ENCODE measurements at regions of chr1 and their contacts with region 1.

Region 1: GRCh38 chr1:39609618-39610331 is 29.7 kb downstream of the HEYL start:
- DNase-seq: peak; percentile 79
- ATAC-seq: peak; percentile 72
- H3K4me3 ChIP-seq: no peak overlapping the region
- H3K4me3 Mint-ChIP-seq: no peak overlapping the region
- H3K27ac ChIP-seq: no peak overlapping the region
- H3K27ac Mint-ChIP-seq: no peak overlapping the region
- H3K4me1 ChIP-seq: peaks cover 0 to 10% of the 10 kb centered on the region in 2 donors
- H3K4me1 Mint-ChIP-seq: peaks cover 10% of the 10 kb centered on the region
- H3K27me3 ChIP-seq: peaks cover 0 to 8% (median 0%) of the 10 kb centered on the region in 4 experiments
- H3K27me3 Mint-ChIP-seq: peaks cover 11% of the 10 kb centered on the region
- CTCF ChIP-seq: peak; percentile 76

Region 2: GRCh38 chr1:39250460-39251240 is 359.1 kb before region 1 on chr1:
- CTCF ChIA-PET with region 1: no interaction called
- POLR2A ChIA-PET with region 1: no interaction called
- intact Hi-C with region 1: no loop called
- DNase-seq: no peak
- ATAC-seq: no peak
- H3K4me3 ChIP-seq: no peak overlapping the region
- H3K4me3 Mint-ChIP-seq: no peak overlapping the region
- H3K27ac ChIP-seq: no peak overlapping the region
- H3K27ac Mint-ChIP-seq: peak overlapping the region; percentile 5
- H3K4me1 ChIP-seq: no peaks in the 10 kb centered on the region
- H3K4me1 Mint-ChIP-seq: peaks cover 2% of the 10 kb centered on the region
- H3K27me3 ChIP-seq: no peaks in the 10 kb centered on the region
- H3K27me3 Mint-ChIP-seq: no peaks in the 10 kb centered on the region
- CTCF ChIP-seq: no peak

Region 3: DNA sequence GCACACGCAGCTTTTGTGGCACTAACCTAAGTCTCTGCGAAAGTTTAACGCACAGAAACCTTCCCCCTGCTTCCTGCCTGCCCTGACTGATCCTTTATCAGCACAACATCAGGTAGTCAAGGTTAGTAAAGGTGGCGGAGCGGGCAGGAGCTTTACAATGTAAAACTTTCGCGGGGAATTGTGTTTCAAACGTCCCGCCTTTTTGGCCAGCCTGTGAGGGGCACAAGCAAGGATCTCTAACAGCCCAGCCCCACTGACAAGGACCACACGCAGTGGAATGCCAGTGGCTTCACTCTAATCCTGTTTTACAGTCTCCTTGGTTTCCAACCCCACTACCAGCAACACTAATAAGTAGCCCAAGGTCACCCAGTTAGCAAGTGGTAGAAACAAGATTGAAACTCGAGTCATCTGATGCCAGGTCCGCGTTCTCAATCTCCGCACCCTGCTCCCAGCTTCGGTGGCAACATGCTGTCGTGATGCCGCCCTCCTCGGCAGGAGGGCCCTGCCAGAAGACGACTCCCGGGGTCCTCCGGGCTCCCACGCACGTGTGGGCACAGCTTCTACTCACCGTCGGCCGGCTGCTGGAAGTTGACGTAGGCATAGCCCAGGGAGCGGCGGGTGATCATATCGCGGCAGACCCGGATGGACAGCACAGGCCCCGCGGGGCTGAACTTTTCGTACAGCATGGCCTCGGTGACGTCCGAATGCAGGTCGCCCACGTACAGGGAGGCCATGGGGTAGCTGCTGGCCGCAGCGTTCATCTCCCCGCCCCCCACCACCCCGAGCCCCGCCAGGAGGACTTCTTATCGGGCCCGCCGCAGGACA is 34.4 kb before region 1 on chr1:
- CTCF ChIA-PET with region 1: interaction called, 10 read pairs
- POLR2A ChIA-PET with region 1: no interaction called
- intact Hi-C with region 1: no loop called
- DNase-seq: peak; percentile 62
- ATAC-seq: peak; percentile 25
- H3K4me3 ChIP-seq: peak overlapping the region; percentile 55 to 93 (median 75)
- H3K4me3 Mint-ChIP-seq: peak overlapping the region; percentile 90
- H3K27ac ChIP-seq: peak overlapping the region; percentile 11 to 52
- H3K27ac Mint-ChIP-seq: peak overlapping the region; percentile 80
- H3K4me1 ChIP-seq: peaks cover 24 to 28% of the 10 kb centered on the region in 2 donors
- H3K4me1 Mint-ChIP-seq: peaks cover 28% of the 10 kb centered on the region
- H3K27me3 ChIP-seq: no peaks in the 10 kb centered on the region
- H3K27me3 Mint-ChIP-seq: no peaks in the 10 kb centered on the region
- CTCF ChIP-seq: no peak

Region 4: GRCh38 chr1:39653546-39654031 is 43.8 kb after region 1 on chr1:
- CTCF ChIA-PET with region 1: interaction called, 190 read pairs
- POLR2A ChIA-PET with region 1: no interaction called
- intact Hi-C with region 1: loop called (anchors 1 kb)
- DNase-seq: peak; percentile 77
- ATAC-seq: peak; percentile 45
- H3K4me3 ChIP-seq: no peak overlapping the region
- H3K4me3 Mint-ChIP-seq: no peak overlapping the region
- H3K27ac ChIP-seq: no peak overlapping the region
- H3K27ac Mint-ChIP-seq: no peak overlapping the region
- H3K4me1 ChIP-seq: peaks cover 4 to 8% of the 10 kb centered on the region in 2 donors
- H3K4me1 Mint-ChIP-seq: peaks cover 4% of the 10 kb centered on the region
- H3K27me3 ChIP-seq: peaks cover 0 to 8% (median 6%) of the 10 kb centered on the region in 4 experiments
- H3K27me3 Mint-ChIP-seq: peaks cover 14% of the 10 kb centered on the region
- CTCF ChIP-seq: peak; percentile 91

Region 5: DNA sequence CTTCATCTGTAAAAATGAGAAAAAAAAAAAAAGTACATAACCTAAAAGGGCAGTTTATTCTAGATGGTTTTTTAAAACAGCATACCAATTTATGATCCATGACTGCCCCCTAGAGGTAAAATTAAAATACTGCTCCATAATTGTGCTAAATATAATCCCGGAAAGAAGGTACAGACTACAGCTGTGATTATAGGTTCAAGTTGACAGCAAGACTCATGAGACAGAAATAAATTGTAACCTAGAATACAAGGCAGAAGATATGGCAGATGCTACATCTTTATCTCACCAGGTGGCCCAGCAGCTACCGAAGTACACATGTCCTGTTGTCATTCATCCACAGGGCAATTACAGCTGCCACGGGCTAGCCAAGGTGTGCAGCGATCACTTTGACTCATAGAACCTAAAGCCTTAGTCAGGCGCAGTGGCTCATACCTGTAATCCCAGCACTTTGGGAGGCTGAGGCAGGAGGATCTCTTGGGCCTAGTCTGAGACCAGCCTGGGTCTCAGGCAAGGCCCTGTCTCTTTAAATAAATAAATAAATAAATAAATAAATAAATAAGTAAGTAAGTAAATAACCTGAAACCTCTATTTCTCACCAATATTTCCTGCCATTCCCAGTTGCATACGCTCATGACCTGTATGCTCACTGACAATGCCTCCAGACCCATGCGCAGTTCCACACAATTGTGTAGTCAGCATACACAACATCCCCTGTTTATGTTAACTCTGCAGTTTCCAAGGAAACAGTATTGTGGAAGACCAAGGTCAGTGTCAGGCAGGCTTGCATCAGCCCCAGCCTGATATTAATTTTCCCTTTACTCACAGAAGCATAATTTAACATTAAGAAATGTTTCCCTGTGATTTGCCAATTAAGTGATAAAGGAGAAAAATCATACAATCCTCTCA is 110.6 kb after region 1 on chr1:
- CTCF ChIA-PET with region 1: interaction called, 26 read pairs
- POLR2A ChIA-PET with region 1: no interaction called
- intact Hi-C with region 1: loop called (anchors 1 kb)
- DNase-seq: peak; percentile 76
- ATAC-seq: peak; percentile 65
- H3K4me3 ChIP-seq: no peak overlapping the region
- H3K4me3 Mint-ChIP-seq: no peak overlapping the region
- H3K27ac ChIP-seq: no peak overlapping the region
- H3K27ac Mint-ChIP-seq: no peak overlapping the region
- H3K4me1 ChIP-seq: no peaks in the 10 kb centered on the region
- H3K4me1 Mint-ChIP-seq: no peaks in the 10 kb centered on the region
- H3K27me3 ChIP-seq: peaks cover 0 to 13% (median 8%) of the 10 kb centered on the region in 4 experiments
- H3K27me3 Mint-ChIP-seq: peaks cover 39% of the 10 kb centered on the region
- CTCF ChIP-seq: peak; percentile 90

Region 6: GRCh38 chr1:39738622-39739366 is 129.0 kb after region 1 on chr1 and contains the start of gene PPIE:
- CTCF ChIA-PET with region 1: interaction called, 8 read pairs
- POLR2A ChIA-PET with region 1: no interaction called
- intact Hi-C with region 1: loop called (anchors 1 kb)
- DNase-seq: peak; percentile 91
- ATAC-seq: peak; percentile 99
- H3K4me3 ChIP-seq: peak within 1 kb of the TSS; percentile 64 to 92 (median 81)
- H3K4me3 Mint-ChIP-seq: peak within 1 kb of the TSS; percentile 98
- H3K27ac ChIP-seq: peak within 1 kb of the TSS; percentile 58 to 78
- H3K27ac Mint-ChIP-seq: peak within 1 kb of the TSS; percentile 91
- H3K4me1 ChIP-seq: peaks cover 9 to 16% of the 10 kb centered on the region in 2 donors
- H3K4me1 Mint-ChIP-seq: peaks cover 19% of the 10 kb centered on the region
- H3K27me3 ChIP-seq: peaks cover 0 to 18% (median 14%) of the 10 kb centered on the region in 4 experiments
- H3K27me3 Mint-ChIP-seq: peaks cover 19% of the 10 kb centered on the region
- CTCF ChIP-seq: no peak
- total RNA-seq, gene PPIE: 68.6 and 69.4 TPM in 2 replicates

Region 7: DNA sequence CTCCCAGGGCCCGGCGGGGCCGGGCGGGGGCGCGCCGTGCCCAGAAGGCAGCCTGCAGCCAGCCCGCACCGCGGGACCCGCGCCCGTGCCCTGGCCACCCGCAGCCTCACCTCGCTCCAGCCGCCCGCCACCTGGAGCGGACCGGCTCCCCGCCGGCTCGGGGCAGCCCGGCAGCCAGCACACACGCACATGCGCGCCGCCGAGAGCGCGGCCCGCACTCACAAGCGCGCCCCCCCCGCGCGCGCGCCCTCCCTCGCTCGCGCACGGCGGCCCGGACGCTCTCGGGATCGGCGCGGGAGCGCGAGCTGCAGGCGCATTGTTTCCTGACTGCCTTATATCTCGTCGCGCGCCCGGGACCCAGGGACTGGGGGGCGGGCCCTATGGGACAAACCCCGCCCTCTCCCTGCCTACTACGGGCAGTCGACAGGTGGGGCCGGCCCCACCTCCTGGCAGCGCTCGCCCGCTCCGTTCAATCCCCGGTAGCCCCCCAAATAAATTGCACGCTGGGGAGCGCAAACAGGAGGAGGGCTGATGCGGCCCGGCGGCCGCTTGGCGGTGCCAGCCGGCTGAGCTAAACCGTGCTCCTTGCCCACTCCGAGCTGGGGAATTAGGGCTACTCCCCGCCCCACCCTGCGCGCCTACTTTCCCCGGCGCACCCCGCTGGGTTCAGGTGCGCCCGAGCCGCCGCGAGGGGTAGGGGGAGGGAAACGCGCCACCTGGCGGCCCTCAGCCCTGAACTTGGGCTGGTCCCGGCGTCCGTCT is 292.1 kb after region 1 on chr1 and contains the start of gene MYCL:
- CTCF ChIA-PET with region 1: interaction called, 6 read pairs
- POLR2A ChIA-PET with region 1: no interaction called
- intact Hi-C with region 1: loop called (anchors 1 kb)
- DNase-seq: peak; percentile 80
- ATAC-seq: peak; percentile 82
- H3K4me3 ChIP-seq: peak within 1 kb of the TSS; percentile 21 to 71 (median 61)
- H3K4me3 Mint-ChIP-seq: peak within 1 kb of the TSS; percentile 85
- H3K27ac ChIP-seq: no peak within 1 kb of the TSS
- H3K27ac Mint-ChIP-seq: peak within 1 kb of the TSS; percentile 20
- H3K4me1 ChIP-seq: peaks cover 14 to 20% of the 10 kb centered on the region in 2 donors
- H3K4me1 Mint-ChIP-seq: peaks cover 6% of the 10 kb centered on the region
- H3K27me3 ChIP-seq: peaks cover 0 to 71% (median 25%) of the 10 kb centered on the region in 4 experiments
- H3K27me3 Mint-ChIP-seq: peaks cover 47% of the 10 kb centered on the region
- CTCF ChIP-seq: peak; percentile 77
- total RNA-seq, gene MYCL: 0.49 and 0.62 TPM in 2 replicates